ENCODE measurements at regions of chr5 and their contacts with region 1.

Region 1: GRCh38 chr5:15574806-15575325 is 74.9 kb downstream of the FBXL7 start:
- DNase-seq: no peak
- H3K4me3 ChIP-seq: no peak overlapping the region
- H3K27ac ChIP-seq: no peak overlapping the region
- H3K4me1 ChIP-seq: no peaks in the 10 kb centered on the region
- H3K27me3 ChIP-seq: no peaks in the 10 kb centered on the region
- CTCF ChIP-seq: no peak

Region 2: DNA sequence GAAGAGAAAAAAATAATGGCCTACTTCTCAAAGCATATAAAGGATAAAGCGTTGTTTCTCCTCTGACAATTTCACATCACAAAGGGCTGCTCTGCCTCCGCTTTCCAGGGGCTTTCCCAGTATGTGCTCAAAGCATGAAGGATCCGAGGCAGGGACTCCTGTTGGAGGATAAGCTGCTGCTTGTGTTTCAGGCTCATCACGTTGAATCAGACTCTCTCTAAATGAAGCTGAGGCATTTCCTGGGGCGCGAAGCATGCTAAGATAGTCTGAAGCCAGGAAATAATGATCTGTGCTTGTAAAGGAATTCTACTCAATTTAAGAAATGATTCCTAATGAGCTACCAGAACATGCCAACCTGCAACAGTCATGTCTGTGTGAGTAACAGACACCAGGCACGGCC is 507.2 kb after region 1 on chr5:
- CTCF ChIA-PET with region 1: no interaction called
- POLR2A ChIA-PET with region 1: interaction called, 10 read pairs
- intact Hi-C with region 1: no loop called
- DNase-seq: no peak
- H3K4me3 ChIP-seq: no peak overlapping the region
- H3K27ac ChIP-seq: no peak overlapping the region
- H3K4me1 ChIP-seq: no peaks in the 10 kb centered on the region
- H3K27me3 ChIP-seq: peaks cover 26% of the 10 kb centered on the region
- CTCF ChIP-seq: no peak

Measured in PC-9 (cell line).